Common myeloid progenitor, CD34-positive (primary cell): ENCODE measurements at regions of chr4 and their contacts with region 1.

Region 1: DNA sequence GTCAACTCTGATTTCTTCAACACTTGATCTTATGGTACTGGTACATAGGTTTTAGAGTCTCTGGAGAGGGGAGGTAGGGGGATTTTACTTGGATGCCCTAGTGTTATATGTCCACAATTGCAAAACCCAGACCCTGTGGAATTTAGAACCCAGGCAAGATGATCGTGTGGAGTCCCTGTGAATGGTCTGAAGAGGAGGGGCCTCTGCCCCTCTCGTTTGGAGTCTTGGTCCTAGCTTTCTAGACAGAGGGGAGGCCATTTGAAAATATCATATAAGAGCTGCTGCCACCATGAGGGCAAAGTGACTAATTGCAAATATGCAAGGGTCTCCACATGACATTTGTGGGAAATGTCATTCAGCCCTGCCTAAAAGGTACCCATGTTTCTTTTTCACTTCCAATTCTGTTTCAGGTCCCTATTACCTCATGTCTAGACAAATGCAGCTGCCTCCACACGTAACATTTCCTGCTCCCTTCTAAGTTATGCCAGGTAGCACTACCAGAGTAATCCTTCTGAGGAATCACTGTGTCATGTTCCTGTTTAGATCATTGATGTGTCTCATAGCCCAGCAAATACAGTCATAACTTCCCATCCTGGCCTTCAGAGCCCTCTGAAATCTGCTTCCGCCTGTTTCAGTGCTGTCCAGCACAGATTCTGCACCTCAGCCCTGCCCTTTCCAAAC is 126.8 kb downstream of the KLHL8 start:
- DNase-seq: peak; percentile 68 to 79 (median 75)
- H3K4me3 ChIP-seq: no peak overlapping the region
- H3K27ac ChIP-seq: peak overlapping the region in 1 of 2 experiments; percentile 55
- H3K4me1 ChIP-seq: peaks cover 11 to 26% (median 17%) of the 10 kb centered on the region in 4 experiments
- H3K27me3 ChIP-seq: no peaks in the 10 kb centered on the region

Region 2: GRCh38 chr4:86497980-86498862 is 595.4 kb before region 1 on chr4:
- CTCF ChIA-PET with region 1: interaction called, 13 read pairs
- POLR2A ChIA-PET with region 1: no interaction called
- DNase-seq: peak; percentile 57 to 76 (median 72)
- H3K4me3 ChIP-seq: peak overlapping the region in 1 of 7 experiments; percentile 19
- H3K27ac ChIP-seq: no peak overlapping the region
- H3K4me1 ChIP-seq: peaks cover 0 to 21% (median 12%) of the 10 kb centered on the region in 4 experiments
- H3K27me3 ChIP-seq: no peaks in the 10 kb centered on the region

Region 3: GRCh38 chr4:86917212-86918039 is 176.2 kb before region 1 on chr4:
- CTCF ChIA-PET with region 1: interaction called, 77 read pairs
- POLR2A ChIA-PET with region 1: interaction called, 5 read pairs
- DNase-seq: no peak
- H3K4me3 ChIP-seq: no peak overlapping the region
- H3K27ac ChIP-seq: no peak overlapping the region
- H3K4me1 ChIP-seq: peaks cover 0 to 38% (median 13%) of the 10 kb centered on the region in 4 experiments
- H3K27me3 ChIP-seq: no peaks in the 10 kb centered on the region

Region 4: GRCh38 chr4:86934771-86935565 is 158.6 kb before region 1 on chr4 and contains the start of gene AFF1:
- CTCF ChIA-PET with region 1: interaction called, 20 read pairs
- POLR2A ChIA-PET with region 1: interaction called, 3 read pairs
- DNase-seq: peak; percentile 98
- H3K4me3 ChIP-seq: peak within 1 kb of the TSS; percentile 79 to 97 (median 95)
- H3K27ac ChIP-seq: peak within 1 kb of the TSS; percentile 73 to 94
- H3K4me1 ChIP-seq: peaks cover 24 to 54% (median 41%) of the 10 kb centered on the region in 4 experiments
- H3K27me3 ChIP-seq: no peaks in the 10 kb centered on the region

Region 5: DNA sequence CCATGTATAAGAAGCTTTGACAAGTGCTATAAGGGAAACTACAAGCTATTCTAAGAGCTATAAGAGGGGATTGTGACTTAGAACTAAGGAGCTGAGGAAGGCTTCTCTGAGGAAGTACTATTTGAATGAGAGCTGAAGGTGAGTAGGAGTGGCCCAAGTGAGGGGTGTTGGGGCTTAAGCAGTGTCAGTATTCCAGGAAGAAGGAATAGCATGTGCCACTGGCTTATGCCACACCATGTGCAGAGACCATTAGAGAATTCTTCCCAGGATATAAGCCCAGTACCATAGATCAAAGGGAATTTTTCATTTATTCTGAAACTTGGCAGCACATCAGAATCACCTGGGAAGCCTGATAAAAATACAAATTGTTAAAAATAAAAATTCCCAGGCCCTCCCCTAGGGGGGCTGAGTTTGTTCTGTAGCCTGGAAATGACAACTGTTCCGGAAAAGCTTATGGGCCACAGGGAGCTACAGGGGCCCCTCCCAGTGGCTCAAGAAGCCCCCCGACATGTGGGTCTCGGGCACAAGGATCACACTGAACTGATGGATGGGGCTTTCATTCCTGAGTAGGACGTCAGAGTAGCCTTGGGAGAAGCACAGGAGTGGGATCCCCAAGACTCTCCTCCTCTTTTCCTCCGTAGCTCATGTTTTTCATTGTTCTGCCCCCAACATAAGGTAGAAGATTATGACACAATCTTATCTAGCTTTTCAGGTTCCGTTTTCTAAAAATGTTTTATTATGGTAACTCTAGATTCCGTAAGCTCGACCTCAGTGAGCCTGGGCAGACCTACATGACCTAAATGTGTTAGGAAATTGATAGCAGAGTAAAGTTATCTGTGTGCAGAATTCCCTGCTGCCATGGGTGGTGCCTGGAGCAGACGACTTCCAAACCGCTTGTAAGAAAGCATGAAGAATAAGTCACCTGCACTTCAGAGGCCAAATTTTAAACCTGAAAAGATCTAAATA is 39.5 kb before region 1 on chr4:
- CTCF ChIA-PET with region 1: interaction called, 17 read pairs
- POLR2A ChIA-PET with region 1: no interaction called
- DNase-seq: peak; percentile 77 to 90 (median 84)
- H3K4me3 ChIP-seq: peak overlapping the region in 4 of 7 experiments; percentile 21 to 56 (median 44)
- H3K27ac ChIP-seq: peak overlapping the region; percentile 73 to 87
- H3K4me1 ChIP-seq: peaks cover 26 to 83% (median 60%) of the 10 kb centered on the region in 4 experiments
- H3K27me3 ChIP-seq: no peaks in the 10 kb centered on the region

Region 6: GRCh38 chr4:87179751-87180150 is 86.2 kb after region 1 on chr4:
- CTCF ChIA-PET with region 1: no interaction called
- POLR2A ChIA-PET with region 1: no interaction called
- DNase-seq: no peak
- H3K4me3 ChIP-seq: no peak overlapping the region
- H3K27ac ChIP-seq: no peak overlapping the region
- H3K4me1 ChIP-seq: no peaks in the 10 kb centered on the region
- H3K27me3 ChIP-seq: no peaks in the 10 kb centered on the region

Region 7: DNA sequence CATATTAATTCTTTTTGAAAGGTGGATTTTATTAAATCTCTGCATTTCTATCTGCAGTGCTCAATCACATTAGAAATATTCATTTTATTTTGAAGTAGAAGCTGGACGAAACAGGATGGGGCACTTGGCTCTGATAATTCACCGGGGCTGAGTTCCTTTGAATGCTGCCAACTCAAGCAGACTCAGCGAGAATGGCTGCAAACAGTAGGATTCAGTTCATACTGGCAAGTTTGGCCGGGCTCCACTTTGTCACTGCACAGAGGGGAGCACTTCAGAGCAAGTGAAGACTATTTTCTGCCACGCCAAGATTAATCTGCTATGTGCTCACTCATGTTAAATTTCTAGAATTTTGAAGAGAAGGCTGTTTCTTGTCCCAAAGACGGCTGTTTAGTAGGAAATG is 157.5 kb after region 1 on chr4:
- CTCF ChIA-PET with region 1: no interaction called
- POLR2A ChIA-PET with region 1: no interaction called
- DNase-seq: no peak
- H3K4me3 ChIP-seq: no peak overlapping the region
- H3K27ac ChIP-seq: no peak overlapping the region
- H3K4me1 ChIP-seq: no peaks in the 10 kb centered on the region
- H3K27me3 ChIP-seq: no peaks in the 10 kb centered on the region